ENCODE measurements at regions of chr17 and their contacts with region 1.

Region 1: DNA sequence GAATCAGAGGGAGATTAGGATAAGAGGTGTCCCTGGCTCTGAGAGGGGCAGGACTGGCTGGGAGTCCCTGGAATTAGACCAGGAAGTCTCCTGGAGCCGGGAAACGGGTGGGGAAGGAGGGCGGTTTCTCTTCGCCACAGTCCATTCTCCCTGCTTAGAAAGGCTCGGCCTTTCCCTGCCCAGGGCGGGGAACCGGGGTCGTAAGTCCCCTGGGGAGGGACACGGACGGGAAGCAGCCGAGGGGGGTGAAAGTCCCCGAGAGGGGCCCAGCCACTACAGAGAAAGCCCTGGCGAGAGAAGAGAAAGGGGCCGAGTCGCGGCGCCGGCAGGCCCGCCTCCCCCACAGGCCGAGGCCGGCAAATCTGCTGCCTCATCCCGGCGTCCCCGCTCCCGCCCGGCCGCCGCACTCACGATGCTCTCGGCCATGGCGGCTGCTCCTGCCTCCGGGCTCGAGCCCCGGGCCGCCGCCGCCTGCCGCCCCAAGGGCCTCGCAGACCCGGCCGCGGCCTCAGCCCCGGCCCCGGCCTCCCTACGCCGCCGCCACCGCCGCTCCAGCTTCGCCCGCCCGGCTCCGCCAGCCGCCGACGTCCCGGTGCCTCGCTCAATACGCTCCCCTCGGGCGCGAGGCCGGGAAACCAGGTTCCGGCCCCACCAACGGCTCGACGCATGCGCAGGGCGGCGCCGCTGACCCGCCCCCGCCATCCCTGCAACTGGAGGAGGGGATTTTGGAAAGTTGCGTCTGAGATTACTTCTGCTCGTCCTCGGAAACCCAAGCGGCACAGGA is at the starts of genes NPLOC4 and TSPAN10:
- DNase-seq: peak; percentile 87 to 91
- ATAC-seq: peak; percentile 73 to 80 (median 77)
- H3K4me3 ChIP-seq: peak within 1 kb of the TSS; percentile 94
- H3K27ac ChIP-seq: peak within 1 kb of the TSS; percentile 95
- H3K4me1 ChIP-seq: peaks cover 40% of the 10 kb centered on the region
- H3K27me3 ChIP-seq: no peaks in the 10 kb centered on the region
- CTCF ChIP-seq: no peak
- total RNA-seq, gene NPLOC4: 151 to 324 (median 219) TPM
- total RNA-seq, gene TSPAN10: 0.22 to 0.67 TPM in 2 of 4 donors, not detected in the others

Region 2: DNA sequence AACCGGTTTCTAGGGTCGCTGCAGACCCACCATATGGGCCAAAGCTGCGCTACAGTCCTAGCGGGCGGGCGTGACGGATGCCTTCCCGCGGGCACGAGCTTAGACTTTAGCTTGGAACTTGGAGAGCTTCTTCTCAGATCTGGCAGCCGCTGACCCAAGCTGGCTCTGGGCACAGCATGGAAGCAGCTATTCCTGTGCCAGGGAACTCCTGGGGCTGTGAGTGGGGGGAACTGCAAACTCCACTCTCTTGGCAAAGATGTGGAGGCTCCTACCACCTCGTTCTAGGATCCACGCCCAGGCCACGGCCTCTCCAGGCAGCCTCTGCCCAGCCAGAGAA is 93.4 kb before region 1 on chr17:
- intact Hi-C with region 1: no loop called
- DNase-seq: no peak
- ATAC-seq: no peak
- H3K4me3 ChIP-seq: no peak overlapping the region
- H3K27ac ChIP-seq: no peak overlapping the region
- H3K4me1 ChIP-seq: no peaks in the 10 kb centered on the region
- H3K27me3 ChIP-seq: no peaks in the 10 kb centered on the region
- CTCF ChIP-seq: no peak

Region 3: GRCh38 chr17:81601525-81602120 is 35.1 kb before region 1 on chr17:
- intact Hi-C with region 1: no loop called
- DNase-seq: no peak
- ATAC-seq: peak; percentile 57 to 78 (median 70)
- H3K4me3 ChIP-seq: no peak overlapping the region
- H3K27ac ChIP-seq: no peak overlapping the region
- H3K4me1 ChIP-seq: peaks cover 3% of the 10 kb centered on the region
- H3K27me3 ChIP-seq: no peaks in the 10 kb centered on the region
- CTCF ChIP-seq: peak; percentile 62

Region 4: GRCh38 chr17:81666342-81667191 is 29.9 kb after region 1 on chr17 and contains the starts of genes CCDC137 and OXLD1:
- intact Hi-C with region 1: loop called (anchors 2 kb)
- DNase-seq: peak; percentile 98
- ATAC-seq: peak; percentile 98 to 99 (median 99)
- H3K4me3 ChIP-seq: peak within 1 kb of the TSS; percentile 100
- H3K27ac ChIP-seq: peak within 1 kb of the TSS; percentile 90
- H3K4me1 ChIP-seq: peaks cover 11% of the 10 kb centered on the region
- H3K27me3 ChIP-seq: no peaks in the 10 kb centered on the region
- CTCF ChIP-seq: no peak
- total RNA-seq, gene CCDC137: 4.8 to 14.9 (median 8.6) TPM
- total RNA-seq, gene OXLD1: 15.5 to 23.6 (median 20.5) TPM

Region 5: DNA sequence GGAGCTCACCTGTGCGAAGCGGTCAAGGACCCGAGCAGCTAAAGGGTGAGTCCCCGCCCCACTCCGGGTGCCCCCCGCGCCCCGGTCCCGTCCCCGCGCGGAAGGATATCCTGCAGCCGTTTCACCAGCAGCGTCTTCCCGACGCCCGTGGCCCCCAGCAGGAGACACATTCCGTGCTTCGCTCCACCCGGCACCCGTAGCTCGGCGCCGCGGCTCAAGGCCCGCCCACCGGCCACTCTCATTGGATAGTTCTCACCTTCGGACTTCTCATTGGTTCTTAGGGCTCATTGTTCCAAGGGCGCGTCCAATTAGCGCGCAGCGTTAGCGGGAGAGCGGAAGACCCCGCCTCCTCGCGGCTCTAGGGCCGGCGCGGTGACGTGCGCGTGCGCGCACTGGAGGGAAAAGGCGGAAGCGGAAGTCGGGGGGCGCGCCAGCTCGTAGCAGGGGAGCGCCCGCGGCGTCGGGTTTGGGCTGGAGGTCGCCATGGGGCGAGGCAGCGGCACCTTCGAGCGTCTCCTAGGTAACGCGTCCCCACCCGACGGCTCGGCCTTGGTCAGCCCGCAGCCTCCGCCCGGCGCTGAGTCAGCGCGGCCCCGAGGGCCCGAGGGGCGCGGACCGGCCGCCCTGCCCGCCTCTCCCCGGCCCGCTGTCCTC is 47.0 kb after region 1 on chr17 and contains the starts of genes ARL16 and HGS:
- intact Hi-C with region 1: loop called in 1 of 2 experiments (anchors 5 kb)
- DNase-seq: peak; percentile 98 to 99
- ATAC-seq: peak; percentile 98 to 99 (median 98)
- H3K4me3 ChIP-seq: peak within 1 kb of the TSS; percentile 97
- H3K27ac ChIP-seq: peak within 1 kb of the TSS; percentile 84
- H3K4me1 ChIP-seq: peaks cover 15% of the 10 kb centered on the region
- H3K27me3 ChIP-seq: no peaks in the 10 kb centered on the region
- CTCF ChIP-seq: no peak
- total RNA-seq, gene ARL16: 7.8 to 15.6 (median 11.9) TPM
- total RNA-seq, gene HGS: 38.6 to 74.5 (median 56.5) TPM